ENCODE measurements at regions of chr6 and their contacts with region 1.

Region 1: GRCh38 chr6:15691250-15691869 is 28.5 kb upstream of the DTNBP1 start:
- DNase-seq: peak; percentile 91
- ATAC-seq: peak; percentile 100
- H3K4me3 ChIP-seq: no peak overlapping the region
- H3K4me3 Mint-ChIP-seq: peak overlapping the region; percentile 39
- H3K27ac ChIP-seq: peak overlapping the region in 1 of 2 donors; percentile 34
- H3K27ac Mint-ChIP-seq: peak overlapping the region; percentile 76
- H3K4me1 ChIP-seq: peaks cover 3 to 8% of the 10 kb centered on the region in 2 donors
- H3K4me1 Mint-ChIP-seq: peaks cover 8% of the 10 kb centered on the region
- H3K27me3 ChIP-seq: peaks cover 0 to 3% (median 0%) of the 10 kb centered on the region in 4 experiments
- H3K27me3 Mint-ChIP-seq: no peaks in the 10 kb centered on the region
- CTCF ChIP-seq: peak; percentile 100

Region 2: DNA sequence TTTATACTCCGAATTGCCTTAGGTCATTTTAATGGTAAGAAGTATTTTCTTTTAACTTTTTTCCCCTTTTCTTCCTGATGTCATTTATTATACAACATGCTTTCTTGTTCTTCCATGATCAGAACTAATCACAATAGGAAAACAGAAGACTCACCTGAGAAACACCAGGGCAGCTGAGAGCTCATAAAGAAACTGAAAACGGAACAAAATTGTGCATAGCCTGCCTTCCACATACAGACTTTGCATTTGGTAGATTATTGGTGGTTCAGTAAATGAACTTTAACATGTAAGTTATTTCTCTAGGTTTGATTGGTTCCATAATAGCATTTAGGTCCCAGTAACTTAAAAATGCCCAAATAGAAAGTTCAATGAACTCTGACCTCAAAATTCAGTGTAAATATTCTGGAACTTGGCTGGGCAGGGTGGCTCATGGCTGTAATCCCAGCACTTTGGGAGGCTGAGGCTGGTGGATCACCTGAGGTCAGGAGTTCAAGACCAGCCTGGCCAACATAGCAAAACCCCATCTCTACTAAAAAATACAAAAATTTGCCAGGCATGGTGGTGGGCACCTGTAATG is 132.6 kb after region 1 on chr6:
- CTCF ChIA-PET with region 1: no interaction called
- POLR2A ChIA-PET with region 1: no interaction called
- intact Hi-C with region 1: no loop called
- DNase-seq: no peak
- ATAC-seq: no peak
- H3K4me3 ChIP-seq: no peak overlapping the region
- H3K4me3 Mint-ChIP-seq: no peak overlapping the region
- H3K27ac ChIP-seq: no peak overlapping the region
- H3K27ac Mint-ChIP-seq: no peak overlapping the region
- H3K4me1 ChIP-seq: no peaks in the 10 kb centered on the region
- H3K4me1 Mint-ChIP-seq: no peaks in the 10 kb centered on the region
- H3K27me3 ChIP-seq: peaks cover 0 to 3% (median 1%) of the 10 kb centered on the region in 4 experiments
- H3K27me3 Mint-ChIP-seq: peaks cover 21% of the 10 kb centered on the region
- CTCF ChIP-seq: no peak

Region 3: DNA sequence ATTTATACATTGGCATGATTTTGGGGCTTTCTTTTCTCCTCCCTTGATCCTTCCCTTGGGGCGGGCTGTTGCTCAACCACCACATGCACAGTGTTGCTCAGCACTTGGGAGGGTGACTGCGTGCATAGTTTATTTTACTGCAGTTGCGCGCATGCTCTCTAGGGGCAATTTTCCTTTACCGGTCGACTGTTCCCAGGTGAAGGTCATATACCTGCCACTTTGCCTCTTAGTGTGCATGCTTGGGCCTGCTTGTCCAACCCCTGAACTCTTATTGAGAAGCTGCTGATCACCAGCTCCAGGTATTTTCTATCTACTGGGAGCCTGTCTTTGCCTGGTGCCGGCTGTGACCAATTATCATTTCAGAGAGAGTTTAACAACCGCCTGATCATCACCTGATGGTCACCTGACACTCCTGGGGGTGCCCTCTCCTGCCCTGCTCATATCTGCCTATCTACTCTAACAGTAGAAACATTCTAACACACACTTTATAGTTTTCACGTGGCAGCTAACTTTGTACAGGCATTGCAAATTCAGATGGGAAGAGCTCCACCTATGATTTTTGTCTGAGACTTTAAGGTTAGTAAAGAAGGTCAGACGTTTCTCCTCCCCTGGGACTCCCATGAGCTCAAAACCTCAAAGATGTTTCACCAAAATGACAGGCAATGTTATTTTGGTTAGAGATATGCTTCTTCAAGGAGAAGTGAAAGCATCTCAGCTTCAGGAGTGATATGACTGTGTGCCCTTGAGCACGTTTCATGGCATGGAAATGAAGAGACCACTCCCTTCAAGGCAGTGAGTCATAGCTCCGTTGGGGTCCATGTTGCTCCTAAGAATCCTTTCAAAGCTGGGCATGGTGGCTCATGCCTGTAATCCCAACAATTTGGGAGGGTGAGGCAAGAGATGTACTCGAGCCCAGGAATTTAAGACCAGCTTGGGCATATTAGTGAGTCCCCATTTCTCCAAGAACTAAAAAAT is 210.1 kb after region 1 on chr6:
- CTCF ChIA-PET with region 1: interaction called, 11 read pairs
- POLR2A ChIA-PET with region 1: no interaction called
- intact Hi-C with region 1: loop called (anchors 1 kb)
- DNase-seq: peak; percentile 93
- ATAC-seq: peak; percentile 80
- H3K4me3 ChIP-seq: peak overlapping the region in 3 of 5 experiments; percentile 19 to 43 (median 42)
- H3K4me3 Mint-ChIP-seq: peak overlapping the region; percentile 85
- H3K27ac ChIP-seq: peak overlapping the region; percentile 84 to 93
- H3K27ac Mint-ChIP-seq: peak overlapping the region; percentile 93
- H3K4me1 ChIP-seq: peaks cover 60 to 61% of the 10 kb centered on the region in 2 donors
- H3K4me1 Mint-ChIP-seq: peaks cover 80% of the 10 kb centered on the region
- H3K27me3 ChIP-seq: no peaks in the 10 kb centered on the region
- H3K27me3 Mint-ChIP-seq: no peaks in the 10 kb centered on the region
- CTCF ChIP-seq: peak; percentile 17

Region 4: GRCh38 chr6:16136621-16137450 is 445.5 kb after region 1 on chr6:
- CTCF ChIA-PET with region 1: interaction called, 123 read pairs
- POLR2A ChIA-PET with region 1: interaction called, 3 read pairs
- intact Hi-C with region 1: no loop called
- DNase-seq: no peak
- ATAC-seq: no peak
- H3K4me3 ChIP-seq: no peak overlapping the region
- H3K4me3 Mint-ChIP-seq: peak overlapping the region; percentile 76
- H3K27ac ChIP-seq: no peak overlapping the region
- H3K27ac Mint-ChIP-seq: peak overlapping the region; percentile 37
- H3K4me1 ChIP-seq: peaks cover 33 to 43% of the 10 kb centered on the region in 2 donors
- H3K4me1 Mint-ChIP-seq: peaks cover 66% of the 10 kb centered on the region
- H3K27me3 ChIP-seq: no peaks in the 10 kb centered on the region
- H3K27me3 Mint-ChIP-seq: no peaks in the 10 kb centered on the region
- CTCF ChIP-seq: no peak

Region 5: DNA sequence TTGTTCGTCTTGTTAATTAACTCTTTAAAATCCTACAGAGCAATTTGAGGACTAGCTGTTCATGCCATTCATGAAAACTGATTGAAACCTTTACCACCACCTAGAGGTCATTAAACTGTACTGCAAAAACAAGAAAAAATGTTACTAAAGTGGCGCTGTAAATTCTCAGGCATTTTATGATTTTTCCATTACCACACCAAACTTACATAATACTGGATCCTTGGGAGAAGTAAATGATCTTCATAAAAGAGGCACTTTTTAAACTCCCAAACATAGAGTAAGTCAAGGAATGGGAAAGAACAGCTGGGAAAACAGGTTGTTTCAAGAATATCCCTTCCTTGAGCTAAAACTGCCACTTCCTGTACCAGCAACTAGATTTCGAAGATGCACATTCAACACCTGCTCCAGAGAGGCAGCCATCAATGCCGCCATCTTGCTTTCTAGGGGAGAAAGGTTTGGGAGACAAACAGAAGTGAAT is 491.9 kb after region 1 on chr6:
- CTCF ChIA-PET with region 1: interaction called, 152 read pairs
- POLR2A ChIA-PET with region 1: no interaction called
- intact Hi-C with region 1: loop called (anchors 1 kb)
- DNase-seq: peak; percentile 59
- ATAC-seq: peak; percentile 66
- H3K4me3 ChIP-seq: no peak overlapping the region
- H3K4me3 Mint-ChIP-seq: no peak overlapping the region
- H3K27ac ChIP-seq: no peak overlapping the region
- H3K27ac Mint-ChIP-seq: no peak overlapping the region
- H3K4me1 ChIP-seq: peaks cover 4 to 11% of the 10 kb centered on the region in 2 donors
- H3K4me1 Mint-ChIP-seq: peaks cover 20% of the 10 kb centered on the region
- H3K27me3 ChIP-seq: peaks cover 0 to 4% (median 0%) of the 10 kb centered on the region in 4 experiments
- H3K27me3 Mint-ChIP-seq: no peaks in the 10 kb centered on the region
- CTCF ChIP-seq: peak; percentile 86

Region 6: DNA sequence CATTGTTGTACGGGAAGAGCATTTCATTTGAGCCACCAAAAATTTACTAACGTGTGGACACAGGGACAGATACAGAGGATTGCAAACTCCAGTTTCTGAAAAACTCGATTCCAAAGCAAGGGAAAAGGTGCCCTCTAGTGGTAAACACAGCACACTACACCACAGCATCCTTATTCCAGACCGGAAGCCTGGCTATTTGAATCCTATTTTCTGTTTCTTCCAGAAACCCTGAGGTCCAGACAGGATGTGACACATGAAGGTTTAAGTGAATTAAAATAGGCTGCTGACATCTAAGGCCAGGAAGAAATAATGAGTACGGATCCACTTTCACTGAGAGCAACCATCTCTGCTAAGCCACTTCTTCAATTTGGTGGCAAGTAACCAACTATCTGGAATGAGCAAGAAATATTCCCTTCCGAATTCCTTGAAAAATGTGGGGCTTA is 515.3 kb after region 1 on chr6:
- CTCF ChIA-PET with region 1: interaction called, 176 read pairs
- POLR2A ChIA-PET with region 1: no interaction called
- intact Hi-C with region 1: loop called (anchors 1 kb)
- DNase-seq: peak; percentile 71
- ATAC-seq: peak; percentile 44
- H3K4me3 ChIP-seq: no peak overlapping the region
- H3K4me3 Mint-ChIP-seq: peak overlapping the region; percentile 67
- H3K27ac ChIP-seq: no peak overlapping the region
- H3K27ac Mint-ChIP-seq: peak overlapping the region; percentile 67
- H3K4me1 ChIP-seq: peaks cover 20 to 21% of the 10 kb centered on the region in 2 donors
- H3K4me1 Mint-ChIP-seq: peaks cover 26% of the 10 kb centered on the region
- H3K27me3 ChIP-seq: peaks cover 0 to 4% (median 2%) of the 10 kb centered on the region in 4 experiments
- H3K27me3 Mint-ChIP-seq: peaks cover 12% of the 10 kb centered on the region
- CTCF ChIP-seq: peak; percentile 98

Measured in B cell (primary cell).